HEK293 (cell line): ENCODE measurements at regions of chr2 and their contacts with region 1.

Region 1: DNA sequence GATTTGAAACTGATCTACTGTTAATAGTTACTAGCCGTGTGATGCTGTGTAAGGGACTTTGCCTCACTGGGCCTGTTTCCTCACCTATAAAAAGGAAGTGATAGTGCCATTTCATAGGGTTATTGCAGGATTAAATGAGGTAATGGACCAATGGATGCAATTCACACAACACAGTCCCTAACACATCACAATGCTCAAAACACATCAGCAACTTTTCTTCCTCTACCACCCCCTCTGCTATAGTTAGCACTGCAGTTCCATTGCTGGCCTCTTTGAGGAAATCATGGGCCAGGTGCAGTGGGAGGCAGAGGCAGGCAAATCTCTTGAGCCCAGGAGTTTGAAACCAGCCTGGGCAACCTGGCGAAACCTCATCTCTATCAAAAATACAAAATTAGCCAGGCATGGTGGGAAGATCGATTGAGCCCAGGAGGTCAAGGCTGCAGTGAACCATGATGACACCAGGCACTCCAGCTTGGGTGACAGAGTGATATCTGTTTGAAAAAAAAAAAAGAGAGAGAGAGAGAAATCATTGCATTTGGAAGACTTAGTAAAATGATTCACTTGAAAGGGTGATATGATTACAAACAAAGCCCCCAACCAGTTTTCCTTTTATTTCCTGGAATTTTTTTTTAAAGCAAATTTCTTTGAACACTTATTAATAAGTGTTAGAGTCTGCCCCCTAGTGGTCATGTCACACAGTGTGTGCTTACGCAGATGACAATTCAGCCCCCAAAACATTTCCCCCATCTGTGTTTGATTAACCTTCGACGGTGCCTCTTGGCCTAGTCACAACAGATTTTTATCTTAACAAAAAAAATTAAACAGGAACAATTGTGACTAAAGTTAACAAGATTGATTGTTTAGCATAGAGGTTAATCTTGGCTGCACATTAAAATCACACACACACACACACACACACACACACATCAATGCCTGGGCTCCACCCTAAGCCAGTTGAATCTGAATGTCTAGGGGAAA is 88.6 kb upstream of the BCL11A start:
- H3K4me3 ChIP-seq: no peak overlapping the region
- H3K27ac ChIP-seq: no peak overlapping the region
- H3K4me1 ChIP-seq: no peaks in the 10 kb centered on the region
- CTCF ChIP-seq: no peak

Region 2: DNA sequence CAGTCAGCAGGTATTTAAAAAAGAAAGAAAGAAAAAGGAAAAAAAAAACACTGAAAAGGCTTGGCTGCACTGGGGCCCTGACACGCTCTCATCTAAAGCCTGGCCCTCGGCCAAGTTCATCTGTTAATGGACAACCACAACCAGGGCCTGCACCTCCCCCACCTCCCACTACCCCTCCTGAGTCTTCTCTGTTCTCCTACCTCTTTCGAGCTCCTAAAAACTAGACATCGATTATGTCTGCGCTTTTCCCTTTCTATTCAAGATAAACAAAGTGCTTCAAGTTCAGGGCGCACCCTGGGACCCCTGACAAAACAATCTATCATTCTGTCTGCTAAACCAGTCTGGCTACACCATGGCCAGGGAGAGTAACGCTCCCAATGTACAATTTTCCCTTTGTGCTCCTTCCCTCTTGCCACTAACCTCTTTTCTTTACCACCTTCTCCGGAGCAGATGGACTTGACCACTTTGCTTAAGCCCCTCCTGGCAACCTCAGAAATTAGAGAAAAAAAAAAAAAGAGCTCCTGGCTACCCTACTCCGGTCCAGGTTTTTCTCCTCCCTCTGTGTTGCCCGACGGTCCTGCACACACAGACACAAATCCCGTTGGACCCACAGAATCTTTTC is 111.3 kb before region 1 on chr2:
- CTCF ChIA-PET with region 1: no interaction called
- POLR2A ChIA-PET with region 1: no interaction called
- H3K4me3 ChIP-seq: peak overlapping the region; percentile 28
- H3K27ac ChIP-seq: peak overlapping the region; percentile 85
- H3K4me1 ChIP-seq: peaks cover 59% of the 10 kb centered on the region
- CTCF ChIP-seq: no peak

Region 3: DNA sequence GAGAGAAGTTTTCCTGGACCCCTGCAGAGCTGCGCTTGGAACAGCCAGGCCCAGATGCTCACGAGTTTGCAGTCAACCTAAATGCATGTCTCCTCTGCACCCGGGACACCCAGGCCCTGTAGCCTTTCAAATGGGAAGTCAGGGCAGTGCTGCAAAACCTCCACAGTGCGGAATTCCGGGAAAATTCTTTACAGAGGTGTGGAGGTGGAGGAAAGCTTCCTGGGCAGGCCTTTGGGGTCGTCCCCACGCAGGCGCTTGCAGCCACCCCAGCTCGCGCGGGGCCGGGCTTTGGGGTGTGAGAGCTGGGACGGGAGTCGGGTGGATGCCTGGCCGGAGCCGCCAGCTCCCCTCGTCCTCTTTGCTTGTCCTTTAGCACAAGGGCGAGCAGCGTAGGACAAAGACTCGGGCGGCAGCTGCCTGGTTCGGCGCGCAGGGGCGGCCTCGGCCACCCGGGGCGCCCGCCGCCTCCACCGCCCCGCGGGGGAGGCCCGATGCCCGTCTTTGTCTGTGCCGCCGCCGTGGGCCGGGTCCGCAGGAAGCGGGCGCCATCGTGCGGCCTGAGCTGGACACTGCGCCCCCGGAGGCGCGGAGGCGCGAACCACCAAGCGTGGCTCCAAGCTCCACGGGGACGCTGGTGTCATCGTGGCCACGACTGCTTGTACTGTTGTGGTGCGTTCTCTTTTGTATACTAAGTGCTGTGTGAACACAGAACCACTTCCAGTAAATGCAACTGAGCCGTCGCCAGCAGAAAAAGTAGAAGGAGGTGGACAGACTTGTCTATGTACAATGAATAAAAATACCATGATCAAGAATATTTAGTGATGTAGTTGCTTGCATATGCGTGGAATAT is 60.4 kb before region 1 on chr2:
- CTCF ChIA-PET with region 1: interaction called, 10 read pairs
- POLR2A ChIA-PET with region 1: no interaction called
- H3K4me3 ChIP-seq: peak overlapping the region; percentile 31
- H3K27ac ChIP-seq: peak overlapping the region; percentile 48; the same call in 1 of the 2 replicates
- H3K4me1 ChIP-seq: peaks cover 6% of the 10 kb centered on the region
- CTCF ChIP-seq: peak; percentile 92

Region 4: GRCh38 chr2:60629801-60630385 is 12.2 kb before region 1 on chr2:
- CTCF ChIA-PET with region 1: interaction called, 11 read pairs
- POLR2A ChIA-PET with region 1: no interaction called
- H3K4me3 ChIP-seq: no peak overlapping the region
- H3K27ac ChIP-seq: no peak overlapping the region
- H3K4me1 ChIP-seq: no peaks in the 10 kb centered on the region
- CTCF ChIP-seq: no peak